ENCODE measurements at regions of chr3 and their contacts with region 1.

Region 1: DNA sequence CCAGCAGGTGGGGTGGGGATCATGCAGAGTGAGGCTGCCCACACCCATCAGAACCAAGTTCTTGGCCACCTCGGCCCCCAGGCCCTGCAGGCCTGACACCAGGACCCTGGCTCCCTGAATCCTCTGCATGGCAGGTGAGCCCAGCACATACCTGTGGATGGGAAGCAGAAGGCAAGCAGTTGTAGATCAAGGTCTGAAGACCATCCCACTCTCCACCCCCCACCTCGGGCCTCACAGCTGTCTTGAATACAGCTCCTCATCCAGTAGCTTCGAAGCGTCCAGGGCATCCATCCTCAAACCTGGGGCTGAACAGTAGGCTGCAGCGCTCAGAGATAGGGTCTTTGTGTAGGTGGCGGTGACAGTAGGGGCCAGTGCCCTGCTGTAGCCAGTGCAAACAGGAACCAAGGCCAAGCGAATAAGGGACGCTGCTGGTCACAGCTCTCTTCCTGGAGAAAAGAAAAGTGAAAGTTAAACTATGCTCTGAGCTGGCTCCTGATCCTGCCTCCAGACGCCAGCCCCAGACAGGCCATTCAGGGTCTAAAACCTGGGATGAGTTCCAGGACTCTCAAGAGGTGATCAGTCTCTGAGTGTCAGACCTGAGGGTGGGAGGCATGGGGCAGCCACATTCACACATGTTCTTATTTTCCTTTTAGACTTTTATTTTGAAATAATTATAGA is at the start of gene UBA7:
- DNase-seq: peak in 18 of 35 experiments; percentile 11 to 65 (median 25)
- ATAC-seq: peak; percentile 86 to 93 (median 89)
- H3K4me3 ChIP-seq: peak within 1 kb of the TSS; percentile 65 to 82
- H3K4me3 Mint-ChIP-seq: peak within 1 kb of the TSS; percentile 85 to 97 (median 95)
- H3K27ac ChIP-seq: peak within 1 kb of the TSS; percentile 88
- H3K27ac Mint-ChIP-seq: peak within 1 kb of the TSS; percentile 98 to 99
- H3K4me1 ChIP-seq: peaks cover 2 to 41% of the 10 kb centered on the region in 2 experiments
- H3K4me1 Mint-ChIP-seq: peaks cover 42 to 49% (median 44%) of the 10 kb centered on the region in 3 donors
- H3K27me3 ChIP-seq: no peaks in the 10 kb centered on the region
- H3K27me3 Mint-ChIP-seq: no peaks in the 10 kb centered on the region
- total RNA-seq, gene UBA7: 246 to 299 (median 293) TPM

Region 2: GRCh38 chr3:48681974-48682610 is 1131.5 kb before region 1 on chr3:
- CTCF ChIA-PET with region 1: no interaction called
- POLR2A ChIA-PET with region 1: interaction called in 1 of 2 experiments, 13 read pairs
- DNase-seq: no peak
- ATAC-seq: no peak
- H3K4me3 ChIP-seq: no peak overlapping the region
- H3K4me3 Mint-ChIP-seq: no peak overlapping the region
- H3K27ac ChIP-seq: no peak overlapping the region
- H3K27ac Mint-ChIP-seq: no peak overlapping the region
- H3K4me1 ChIP-seq: peaks cover 4 to 39% of the 10 kb centered on the region in 2 experiments
- H3K4me1 Mint-ChIP-seq: peaks cover 33 to 53% (median 49%) of the 10 kb centered on the region in 3 donors
- H3K27me3 ChIP-seq: no peaks in the 10 kb centered on the region
- H3K27me3 Mint-ChIP-seq: no peaks in the 10 kb centered on the region

Region 3: DNA sequence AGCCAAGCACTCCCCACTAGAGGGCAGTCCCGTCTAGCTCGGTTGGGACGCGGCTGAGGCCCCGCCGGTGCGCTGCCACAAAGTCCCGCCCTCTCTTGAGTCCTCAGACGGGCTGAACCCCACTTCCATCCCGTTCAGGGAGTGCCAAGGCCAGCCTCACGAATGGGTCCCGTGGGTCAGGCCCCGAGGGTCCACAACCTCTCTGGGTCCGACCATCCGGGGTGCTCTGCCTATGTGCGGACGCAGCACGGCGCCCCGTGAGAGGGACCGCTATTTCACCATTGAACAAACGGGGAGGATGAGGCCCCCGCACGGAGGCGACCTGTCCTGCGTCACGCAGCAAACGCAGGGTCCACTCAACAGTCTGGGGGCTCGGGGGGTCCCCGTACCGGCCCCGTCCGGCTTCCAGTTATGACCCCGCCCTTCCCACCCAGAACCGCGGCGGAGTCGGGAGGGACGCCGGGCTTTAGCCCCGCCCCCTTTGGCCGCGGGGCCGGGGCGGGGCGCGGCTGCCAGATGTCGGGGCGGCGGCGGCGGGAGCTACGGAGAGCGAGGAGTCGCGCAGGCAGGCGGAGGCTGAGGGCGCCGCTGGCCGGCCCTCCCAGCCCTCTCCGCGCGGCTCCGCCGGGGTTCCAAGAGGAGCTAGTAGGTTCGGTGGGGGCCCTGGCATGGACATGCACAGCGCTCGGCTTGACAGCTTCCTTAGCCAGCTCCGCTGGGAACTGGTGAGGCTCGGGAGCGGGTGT is 10.7 kb before region 1 on chr3 and contains the start of gene INKA1:
- CTCF ChIA-PET with region 1: interaction called in 1 of 2 experiments, 22 read pairs
- POLR2A ChIA-PET with region 1: interaction called, 3 to 14 read pairs
- DNase-seq: peak; percentile 73 to 94 (median 85)
- ATAC-seq: peak; percentile 83 to 85 (median 84)
- H3K4me3 ChIP-seq: peak within 1 kb of the TSS; percentile 79 to 98
- H3K4me3 Mint-ChIP-seq: peak within 1 kb of the TSS; percentile 86 to 89 (median 87)
- H3K27ac ChIP-seq: peak within 1 kb of the TSS; percentile 84
- H3K27ac Mint-ChIP-seq: peak within 1 kb of the TSS; percentile 85 to 93
- H3K4me1 ChIP-seq: peaks cover 25 to 54% of the 10 kb centered on the region in 2 experiments
- H3K4me1 Mint-ChIP-seq: peaks cover 40 to 44% (median 44%) of the 10 kb centered on the region in 3 donors
- H3K27me3 ChIP-seq: peaks cover 0 to 8% of the 10 kb centered on the region in 2 experiments
- H3K27me3 Mint-ChIP-seq: peaks cover 0 to 8% of the 10 kb centered on the region in 2 donors
- total RNA-seq, gene INKA1: 0.73 to 2.7 (median 1.8) TPM

Region 4: GRCh38 chr3:49984394-49984793 is 170.8 kb after region 1 on chr3:
- CTCF ChIA-PET with region 1: no interaction called
- POLR2A ChIA-PET with region 1: no interaction called
- DNase-seq: no peak
- ATAC-seq: no peak
- H3K4me3 ChIP-seq: no peak overlapping the region
- H3K4me3 Mint-ChIP-seq: no peak overlapping the region
- H3K27ac ChIP-seq: no peak overlapping the region
- H3K27ac Mint-ChIP-seq: no peak overlapping the region
- H3K4me1 ChIP-seq: no peaks in the 10 kb centered on the region
- H3K4me1 Mint-ChIP-seq: peaks cover 0 to 5% (median 0%) of the 10 kb centered on the region in 3 donors
- H3K27me3 ChIP-seq: no peaks in the 10 kb centered on the region
- H3K27me3 Mint-ChIP-seq: no peaks in the 10 kb centered on the region

Measured in T-cell (primary cell).